ENCODE measurements at regions of chr9 and their contacts with region 1.

Region 1: DNA sequence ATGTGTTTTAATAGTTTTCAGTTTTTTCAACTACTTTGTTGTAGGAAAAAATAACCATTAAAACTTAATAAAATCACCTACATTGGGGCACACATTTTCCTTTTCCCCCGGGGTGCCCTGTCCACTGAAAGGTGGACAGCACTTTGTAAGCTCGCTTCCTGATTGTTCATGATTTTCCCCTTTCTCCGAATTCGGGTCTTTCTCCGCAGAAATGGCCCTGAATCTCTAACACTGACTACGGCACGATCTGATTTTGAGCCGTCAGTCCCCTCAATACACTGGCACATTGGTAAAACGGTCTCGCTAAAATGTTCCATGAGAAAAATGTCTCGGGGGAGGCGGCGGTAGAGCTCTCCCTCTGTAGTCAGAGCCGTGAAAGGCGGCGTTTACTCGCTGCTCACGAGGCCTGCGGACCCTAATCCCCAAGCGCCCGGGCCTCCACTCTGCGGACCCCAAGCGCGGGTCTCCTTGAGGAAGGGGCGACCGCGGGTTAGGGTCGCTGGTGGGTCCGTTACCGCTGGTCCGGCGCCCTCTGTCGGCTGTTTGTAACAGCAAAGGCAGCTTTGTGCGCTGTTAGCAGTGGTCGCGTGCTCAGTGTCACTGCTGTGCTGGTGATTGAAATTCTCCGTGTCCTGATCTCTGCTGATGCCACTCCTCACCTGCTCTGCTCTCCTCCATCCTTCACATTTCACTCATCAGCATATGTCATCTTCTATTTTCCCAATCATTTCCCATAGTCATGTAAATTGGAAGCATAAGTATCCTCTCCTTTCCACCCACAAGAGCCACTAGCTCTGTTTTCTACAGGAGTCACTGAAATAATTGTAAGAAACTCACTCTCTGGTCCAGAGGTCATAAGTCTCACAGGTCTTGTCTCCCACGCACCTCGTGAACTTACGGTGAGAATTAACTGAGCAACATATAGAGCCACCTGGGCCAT is 10.8 kb upstream of the IFNA2 start:
- DNase-seq: peak; percentile 72
- H3K4me3 Mint-ChIP-seq: peak overlapping the region; percentile 37
- H3K27ac Mint-ChIP-seq: no peak overlapping the region
- H3K4me1 Mint-ChIP-seq: peaks cover 5% of the 10 kb centered on the region
- H3K27me3 Mint-ChIP-seq: peaks cover 60% of the 10 kb centered on the region

Region 2: GRCh38 chr9:21252721-21253547 is 143.1 kb before region 1 on chr9:
- CTCF ChIA-PET with region 1: interaction called, 11 read pairs
- DNase-seq: peak; percentile 31
- H3K4me3 Mint-ChIP-seq: no peak overlapping the region
- H3K27ac Mint-ChIP-seq: no peak overlapping the region
- H3K4me1 Mint-ChIP-seq: peaks cover 5% of the 10 kb centered on the region
- H3K27me3 Mint-ChIP-seq: peaks cover 45% of the 10 kb centered on the region

Region 3: DNA sequence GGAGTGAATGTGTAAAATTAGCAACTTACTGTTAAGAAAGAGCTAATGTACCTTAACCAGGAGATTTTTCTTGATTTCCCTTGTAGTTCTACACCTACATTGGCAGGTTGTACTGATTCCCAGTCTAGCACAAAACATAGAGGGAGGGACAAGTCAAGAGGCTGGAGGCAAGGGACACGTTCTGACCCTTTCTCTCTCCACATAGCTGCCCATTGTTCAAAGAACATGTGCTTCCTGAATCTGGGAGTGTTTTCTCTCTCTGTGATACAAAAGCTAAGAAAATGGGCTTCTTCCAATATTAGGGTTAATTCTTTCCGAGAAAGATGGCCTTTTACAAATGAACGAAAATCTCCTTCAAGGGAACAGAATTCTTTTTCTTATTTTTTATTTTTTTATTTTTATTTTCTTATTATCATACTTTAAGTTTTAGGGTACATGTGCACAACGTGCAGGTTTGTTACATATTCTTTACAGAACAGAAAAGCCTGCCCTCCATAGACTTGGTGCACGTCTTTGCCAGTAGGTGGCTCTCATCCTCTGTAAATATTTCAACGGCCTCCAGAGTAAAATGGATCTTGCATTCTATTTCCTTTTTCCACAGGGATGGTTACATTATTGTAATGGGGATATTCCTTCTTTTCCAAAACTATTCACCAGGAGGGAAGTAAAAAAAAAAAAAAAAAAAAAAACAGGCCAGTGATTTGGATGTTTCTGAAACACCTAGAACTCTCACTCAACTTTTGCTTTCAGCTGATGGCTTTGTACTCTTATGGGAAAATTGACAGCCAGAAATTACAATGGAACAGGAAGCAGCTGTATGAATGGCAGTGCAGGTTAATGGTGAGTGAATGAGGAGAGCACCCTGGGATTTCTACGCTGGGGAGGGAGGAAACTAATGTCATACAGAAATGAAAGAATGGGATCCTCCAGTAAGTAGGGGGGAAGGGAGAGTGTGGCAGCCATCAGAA is 77.8 kb before region 1 on chr9:
- CTCF ChIA-PET with region 1: interaction called, 60 read pairs
- DNase-seq: peak; percentile 43
- H3K4me3 Mint-ChIP-seq: no peak overlapping the region
- H3K27ac Mint-ChIP-seq: no peak overlapping the region
- H3K4me1 Mint-ChIP-seq: peaks cover 2% of the 10 kb centered on the region
- H3K27me3 Mint-ChIP-seq: no peaks in the 10 kb centered on the region

Region 4: DNA sequence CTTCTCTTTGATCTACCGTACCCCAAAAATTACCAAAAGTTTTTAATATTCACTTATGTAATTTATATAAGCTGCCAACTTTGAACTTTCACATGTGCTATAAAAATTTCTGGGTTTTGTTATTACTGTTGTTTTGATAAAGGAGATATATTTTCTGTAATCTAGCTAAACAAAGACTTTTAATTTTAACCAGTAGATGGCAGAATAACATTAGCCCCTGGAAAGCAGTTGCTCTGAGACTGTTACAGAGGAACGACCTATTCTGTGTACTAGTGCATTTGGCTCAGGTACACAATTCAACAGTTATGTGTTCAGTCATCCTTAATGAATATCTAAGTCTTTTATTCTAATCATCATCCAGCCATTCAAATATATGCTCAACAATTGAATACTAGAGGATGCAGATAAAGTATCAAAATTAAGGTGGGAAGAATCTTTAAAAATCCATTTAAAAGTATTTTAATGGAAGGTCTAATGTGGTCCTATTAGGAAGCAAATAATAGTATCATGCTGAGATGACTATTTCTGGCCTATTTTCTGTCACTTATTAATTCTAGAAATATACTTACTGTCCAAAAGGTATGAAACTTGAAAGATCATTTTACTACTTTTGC is 69.4 kb before region 1 on chr9:
- CTCF ChIA-PET with region 1: interaction called, 60 read pairs
- DNase-seq: no peak
- H3K4me3 Mint-ChIP-seq: no peak overlapping the region
- H3K27ac Mint-ChIP-seq: no peak overlapping the region
- H3K4me1 Mint-ChIP-seq: peaks cover 30% of the 10 kb centered on the region
- H3K27me3 Mint-ChIP-seq: no peaks in the 10 kb centered on the region

Region 5: GRCh38 chr9:21334701-21335632 is 61.1 kb before region 1 on chr9 and contains the start of gene KLHL9:
- CTCF ChIA-PET with region 1: interaction called, 34 read pairs
- DNase-seq: peak; percentile 89
- H3K4me3 Mint-ChIP-seq: peak within 1 kb of the TSS; percentile 87
- H3K27ac Mint-ChIP-seq: peak within 1 kb of the TSS; percentile 93
- H3K4me1 Mint-ChIP-seq: peaks cover 53% of the 10 kb centered on the region
- H3K27me3 Mint-ChIP-seq: peaks cover 15% of the 10 kb centered on the region

Region 6: GRCh38 chr9:21381448-21382339 is 14.4 kb before region 1 on chr9:
- CTCF ChIA-PET with region 1: interaction called, 14 read pairs
- DNase-seq: peak; percentile 31
- H3K4me3 Mint-ChIP-seq: no peak overlapping the region
- H3K27ac Mint-ChIP-seq: no peak overlapping the region
- H3K4me1 Mint-ChIP-seq: peaks cover 20% of the 10 kb centered on the region
- H3K27me3 Mint-ChIP-seq: peaks cover 46% of the 10 kb centered on the region

Measured in activated naive CD4-positive, alpha-beta T cell treated with anti-CD3 and anti-CD28 coated beads, Interleukin-2, amount 10 ng/mL, durations not matched to agents 7 days and 5 days (primary cell).